Pancreas (tissue), 10 donors: ENCODE measurements at regions of chr7 and their contacts with region 1.

Region 1: DNA sequence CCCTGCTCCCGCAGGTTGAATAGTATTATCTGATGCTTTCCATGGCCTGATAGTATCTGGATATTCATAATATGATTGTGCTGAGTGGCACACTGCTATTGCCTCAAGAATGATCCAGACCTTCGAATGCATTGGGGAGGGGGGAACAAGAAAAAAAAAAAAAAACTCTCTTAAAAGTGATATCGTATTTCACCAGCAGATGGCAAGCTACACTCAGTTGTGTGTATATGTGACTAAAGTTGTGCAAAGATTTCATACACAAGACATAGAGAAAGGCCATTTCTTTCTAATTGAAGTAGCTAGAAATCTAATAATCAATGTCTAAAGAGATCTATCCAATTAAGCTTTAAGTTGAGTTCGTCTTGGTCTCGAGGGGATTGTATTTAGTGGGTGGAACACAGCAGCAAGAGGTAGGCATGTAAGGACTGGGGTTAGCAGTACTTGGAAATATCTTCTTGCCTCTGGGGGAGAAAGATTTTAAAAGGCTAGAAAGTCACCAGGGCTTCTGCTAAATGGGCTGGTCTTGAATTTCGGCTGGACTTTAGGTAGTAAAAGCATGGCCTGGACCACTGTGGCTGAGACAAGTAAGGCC is 15.3 kb downstream of the SFRP4 start:
- DNase-seq: no peak
- ATAC-seq: peak; percentile 70 to 87 (median 84)
- H3K4me3 ChIP-seq: no peak overlapping the region
- H3K27ac ChIP-seq: no peak overlapping the region
- H3K4me1 ChIP-seq: no peaks in the 10 kb centered on the region
- H3K27me3 ChIP-seq: no peaks in the 10 kb centered on the region
- CTCF ChIP-seq: peak in 3 of 4 donors; percentile 27 to 46 (median 31)

Region 2: GRCh38 chr7:38222481-38223096 is 321.3 kb after region 1 on chr7:
- intact Hi-C with region 1: loop called in 2 of 3 experiments (anchors 10 kb)
- DNase-seq: peak in 2 of 6 donors; percentile 17 to 29
- ATAC-seq: peak; percentile 88 to 97 (median 93)
- H3K4me3 ChIP-seq: no peak overlapping the region
- H3K27ac ChIP-seq: no peak overlapping the region
- H3K4me1 ChIP-seq: no peaks in the 10 kb centered on the region
- H3K27me3 ChIP-seq: no peaks in the 10 kb centered on the region
- CTCF ChIP-seq: peak; percentile 68 to 85 (median 76)

Region 3: DNA sequence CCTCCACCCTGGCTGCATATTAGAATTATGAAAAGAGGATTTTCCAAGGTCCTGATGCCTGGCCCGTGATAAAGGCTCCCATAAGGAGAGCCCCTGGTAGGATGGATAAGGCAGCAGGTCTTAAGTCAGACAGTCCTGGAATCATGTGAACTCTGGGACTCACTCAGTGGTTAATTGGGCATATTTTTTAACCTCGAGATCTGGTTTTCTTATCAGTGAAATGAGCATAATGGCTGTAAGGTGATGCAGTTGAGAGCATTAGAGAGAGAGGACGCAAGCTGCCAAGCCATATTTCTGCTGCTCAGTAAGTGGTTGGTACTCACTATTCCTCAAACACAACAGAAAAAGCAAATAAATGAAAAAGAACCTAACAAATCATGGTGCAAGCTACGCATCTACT is 334.3 kb after region 1 on chr7:
- intact Hi-C with region 1: no loop called
- DNase-seq: no peak
- ATAC-seq: no peak
- H3K4me3 ChIP-seq: no peak overlapping the region
- H3K27ac ChIP-seq: no peak overlapping the region
- H3K4me1 ChIP-seq: no peaks in the 10 kb centered on the region
- H3K27me3 ChIP-seq: no peaks in the 10 kb centered on the region
- CTCF ChIP-seq: no peak